Activated CD4-positive, alpha-beta memory T cell treated with anti-CD3 and anti-CD28 coated beads for 36 hours (primary cell): ENCODE measurements at regions of chr2 and their contacts with region 1.

Region 1: DNA sequence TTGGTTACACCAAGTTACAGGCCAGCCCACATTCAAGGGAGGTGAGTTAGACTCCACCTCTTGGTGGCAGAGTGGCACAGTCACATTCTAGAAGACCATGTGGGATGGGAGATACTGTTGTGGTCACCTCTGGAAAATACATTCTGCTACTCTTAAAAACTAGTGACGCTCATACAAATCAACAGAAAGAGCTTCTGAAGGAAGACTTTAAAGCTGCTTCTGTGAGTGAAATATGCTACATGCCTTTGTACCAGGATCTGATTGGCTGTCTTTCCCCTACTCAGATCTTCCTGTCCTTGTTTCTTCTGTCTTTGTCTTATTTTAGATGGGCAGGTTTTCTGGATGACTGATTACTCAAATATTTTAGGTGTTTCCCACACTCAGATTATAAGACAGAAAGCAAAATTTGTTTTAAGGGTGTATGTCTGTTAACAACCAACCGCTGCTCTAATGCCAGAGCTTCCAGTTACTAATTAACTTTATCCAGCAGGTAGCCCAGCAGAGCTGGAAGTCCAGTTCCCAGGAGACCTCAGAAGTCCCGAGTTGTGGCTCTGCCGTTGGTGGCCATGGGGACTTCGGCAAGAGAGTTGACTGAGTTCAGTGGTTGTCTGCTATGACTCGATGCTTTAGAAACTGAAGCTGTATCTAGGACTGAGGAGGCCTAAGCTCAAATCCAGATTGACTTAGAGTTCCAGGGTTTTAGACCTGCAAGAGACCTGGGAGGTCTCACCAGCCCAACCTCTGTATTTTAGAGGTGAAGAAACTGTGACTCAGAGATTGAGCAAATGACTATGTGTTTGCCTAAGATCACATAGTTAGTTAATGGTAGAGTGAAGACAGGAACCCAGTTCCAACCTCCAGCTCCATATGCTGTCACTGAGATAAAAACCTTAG is 7.4 kb downstream of the IL1R2 start:
- DNase-seq: peak; percentile 71
- H3K4me3 Mint-ChIP-seq: peak overlapping the region; percentile 66
- H3K27ac Mint-ChIP-seq: peak overlapping the region; percentile 93
- H3K4me1 Mint-ChIP-seq: peaks cover 36% of the 10 kb centered on the region
- H3K27me3 Mint-ChIP-seq: peaks cover 14% of the 10 kb centered on the region

Region 2: GRCh38 chr2:101831351-101831865 is 167.7 kb before region 1 on chr2:
- CTCF ChIA-PET with region 1: interaction called, 3 read pairs
- POLR2A ChIA-PET with region 1: no interaction called
- intact Hi-C with region 1: loop called (anchors 2 kb)
- DNase-seq: peak; percentile 76
- H3K4me3 Mint-ChIP-seq: no peak overlapping the region
- H3K27ac Mint-ChIP-seq: peak overlapping the region; percentile 71
- H3K4me1 Mint-ChIP-seq: peaks cover 52% of the 10 kb centered on the region
- H3K27me3 Mint-ChIP-seq: no peaks in the 10 kb centered on the region

Region 3: DNA sequence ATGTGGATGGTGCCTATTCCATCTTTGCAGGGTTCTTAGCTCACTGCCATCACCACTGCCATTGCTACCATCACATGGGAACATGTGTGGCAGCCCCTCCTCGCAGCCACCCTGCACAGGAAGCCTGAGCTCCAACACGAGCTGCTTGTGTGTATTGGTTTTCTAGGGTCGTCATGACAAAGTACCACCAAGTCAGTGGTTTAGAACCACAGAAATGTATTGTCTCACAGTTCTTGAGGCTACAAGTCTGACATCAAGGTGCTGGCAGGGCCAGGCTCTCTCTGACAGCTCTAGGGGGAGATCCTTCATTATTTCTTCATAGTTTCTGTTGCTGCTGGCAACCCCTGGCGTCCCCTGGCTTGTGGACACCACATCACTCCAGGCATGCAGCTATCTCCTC is 17.6 kb before region 1 on chr2:
- CTCF ChIA-PET with region 1: no interaction called
- POLR2A ChIA-PET with region 1: no interaction called
- intact Hi-C with region 1: no loop called
- DNase-seq: no peak
- H3K4me3 Mint-ChIP-seq: no peak overlapping the region
- H3K27ac Mint-ChIP-seq: no peak overlapping the region
- H3K4me1 Mint-ChIP-seq: no peaks in the 10 kb centered on the region
- H3K27me3 Mint-ChIP-seq: peaks cover 1% of the 10 kb centered on the region

Region 4: GRCh38 chr2:102013206-102014040 is 14.3 kb after region 1 on chr2:
- CTCF ChIA-PET with region 1: interaction called, 12 read pairs
- POLR2A ChIA-PET with region 1: interaction called, 28 read pairs
- intact Hi-C with region 1: loop called (anchors 1 kb)
- DNase-seq: peak; percentile 42
- H3K4me3 Mint-ChIP-seq: no peak overlapping the region
- H3K27ac Mint-ChIP-seq: peak overlapping the region; percentile 87
- H3K4me1 Mint-ChIP-seq: peaks cover 49% of the 10 kb centered on the region
- H3K27me3 Mint-ChIP-seq: no peaks in the 10 kb centered on the region

Region 5: DNA sequence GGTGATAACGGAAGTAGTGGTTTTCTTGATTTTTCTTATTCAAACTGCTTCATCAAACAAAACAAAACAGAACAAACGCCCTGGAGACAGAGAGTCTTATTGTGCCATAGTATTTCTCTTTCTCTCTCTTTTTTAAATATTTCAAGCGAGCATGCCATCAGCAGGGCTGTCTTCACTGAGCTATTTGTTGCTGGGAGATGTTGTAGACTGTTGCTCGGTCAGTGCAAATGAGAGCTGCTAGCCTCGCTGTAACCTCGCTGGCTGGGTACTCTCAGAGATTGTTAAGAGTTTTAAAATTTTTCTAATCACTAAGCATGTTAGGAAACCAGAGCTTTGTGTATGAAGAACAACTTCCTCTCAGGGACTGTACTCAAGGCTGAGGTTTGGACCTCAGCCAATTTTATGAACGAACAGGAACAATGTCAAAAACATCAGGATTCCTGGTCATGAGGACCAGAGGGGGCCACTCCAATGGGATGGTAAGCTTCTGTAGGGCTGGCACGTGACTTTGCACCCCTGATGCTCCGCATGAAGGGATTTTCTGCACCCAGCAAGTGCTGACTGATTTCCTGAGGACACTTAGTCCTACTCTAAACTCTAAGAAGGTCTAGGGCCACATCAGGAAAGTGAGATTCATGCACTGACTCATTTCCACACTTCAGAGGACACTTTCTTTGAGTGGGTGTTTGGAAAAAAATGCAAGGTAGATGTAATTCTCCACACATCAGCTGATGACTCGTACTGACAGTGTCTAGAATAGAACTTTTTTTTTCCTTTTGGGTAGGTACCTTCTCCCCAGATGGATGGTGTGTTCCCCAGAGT is 83.6 kb after region 1 on chr2:
- CTCF ChIA-PET with region 1: interaction called, 4 read pairs
- POLR2A ChIA-PET with region 1: interaction called, 3 read pairs
- intact Hi-C with region 1: loop called (anchors 1 kb)
- DNase-seq: peak; percentile 80
- H3K4me3 Mint-ChIP-seq: peak overlapping the region; percentile 57
- H3K27ac Mint-ChIP-seq: peak overlapping the region; percentile 92
- H3K4me1 Mint-ChIP-seq: peaks cover 64% of the 10 kb centered on the region
- H3K27me3 Mint-ChIP-seq: no peaks in the 10 kb centered on the region

Region 6: GRCh38 chr2:102258386-102259074 is 259.4 kb after region 1 on chr2:
- CTCF ChIA-PET with region 1: interaction called, 5 read pairs
- POLR2A ChIA-PET with region 1: interaction called, 3 read pairs
- intact Hi-C with region 1: loop called (anchors 1 kb)
- DNase-seq: peak; percentile 64
- H3K4me3 Mint-ChIP-seq: no peak overlapping the region
- H3K27ac Mint-ChIP-seq: peak overlapping the region; percentile 96
- H3K4me1 Mint-ChIP-seq: peaks cover 45% of the 10 kb centered on the region
- H3K27me3 Mint-ChIP-seq: no peaks in the 10 kb centered on the region